ENCODE measurements at regions of chr1 and their contacts with region 1.

Region 1: GRCh38 chr1:35298464-35298863 is 30.0 kb downstream of the ZMYM4 start:
- DNase-seq: peak; percentile 68
- H3K4me3 ChIP-seq: no peak overlapping the region
- H3K27ac ChIP-seq: no peak overlapping the region
- H3K4me1 ChIP-seq: no peaks in the 10 kb centered on the region
- H3K27me3 ChIP-seq: no peaks in the 10 kb centered on the region

Region 2: DNA sequence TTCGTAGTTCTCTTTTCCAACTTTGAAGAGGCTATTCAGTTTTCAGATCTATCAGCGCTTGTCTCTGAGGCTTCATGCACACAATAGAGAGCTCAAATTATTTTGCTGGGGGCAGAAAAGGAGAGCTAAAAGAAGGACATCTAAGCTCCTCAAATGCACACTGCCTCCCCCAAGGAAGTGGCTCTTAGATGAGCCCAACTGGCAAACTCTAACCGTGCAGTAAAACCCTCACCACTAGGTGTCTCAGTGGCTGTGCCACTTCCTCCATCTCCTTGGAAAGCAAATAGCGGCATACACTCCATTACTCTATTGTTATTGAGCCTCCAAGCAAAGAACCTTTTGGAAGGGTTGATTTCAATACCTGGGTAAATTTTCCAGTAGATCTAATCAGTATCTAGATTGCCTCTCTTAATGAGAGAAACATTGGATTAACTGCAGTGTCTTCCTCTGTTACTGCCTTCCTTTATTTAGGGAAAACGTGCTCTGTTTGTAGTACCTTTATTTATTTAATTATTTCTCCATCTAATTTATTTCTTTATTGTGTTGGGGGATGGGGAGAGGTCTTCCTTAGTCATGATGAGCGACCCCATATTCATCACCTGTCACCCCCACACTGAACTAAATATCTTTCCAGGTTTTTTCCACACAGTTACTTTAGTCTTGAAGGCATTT is 96.3 kb before region 1 on chr1:
- in situ Hi-C with region 1: loop called (anchors 10 kb)
- DNase-seq: peak; percentile 90
- H3K4me3 ChIP-seq: peak overlapping the region; percentile 46
- H3K27ac ChIP-seq: no peak overlapping the region
- H3K4me1 ChIP-seq: 0 out of 2 replicates have a peak, but pooled peaks cover 4% of the 10 kb centered on the region
- H3K27me3 ChIP-seq: no peaks in the 10 kb centered on the region

Region 3: GRCh38 chr1:35777109-35777508 is 478.6 kb after region 1 on chr1:
- in situ Hi-C with region 1: no loop called
- DNase-seq: no peak
- H3K4me3 ChIP-seq: no peak overlapping the region
- H3K27ac ChIP-seq: no peak overlapping the region
- H3K4me1 ChIP-seq: no peaks in the 10 kb centered on the region
- H3K27me3 ChIP-seq: no peaks in the 10 kb centered on the region